ENCODE measurements at regions of chr14 and their contacts with region 1.

Region 1: DNA sequence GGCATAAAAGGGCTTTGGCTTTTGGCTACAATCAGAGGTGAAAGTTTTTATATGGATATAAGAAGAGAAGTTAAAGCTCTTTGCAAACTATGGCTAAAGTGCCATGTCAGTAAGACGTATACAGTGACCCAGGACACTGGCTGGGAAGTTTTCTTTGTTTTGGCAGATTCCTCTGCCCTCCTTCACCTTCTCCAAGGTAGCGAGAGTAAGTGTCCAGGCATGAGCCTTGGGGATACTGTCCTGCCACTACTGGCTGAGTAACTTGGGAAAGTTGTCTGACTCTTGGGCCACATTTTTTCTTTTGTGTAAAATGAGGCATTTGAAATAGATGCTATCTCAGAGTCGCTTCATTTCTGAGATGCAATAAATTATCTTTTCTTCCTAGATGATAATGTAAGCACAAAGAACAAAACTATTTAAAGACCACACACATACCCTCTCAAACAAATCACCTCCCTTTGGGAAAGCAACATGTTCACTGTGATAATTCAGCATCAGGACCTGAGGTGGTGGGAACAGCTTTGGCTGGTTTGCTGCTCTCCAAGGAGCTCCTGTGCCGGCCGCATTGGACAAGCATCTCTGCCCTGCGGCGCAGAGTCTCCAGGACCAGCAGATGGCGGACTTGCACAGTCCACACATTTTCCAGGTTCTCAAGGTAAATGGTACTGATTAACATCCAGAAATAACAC is 106.3 kb downstream of the PTCSC3 start:
- DNase-seq: peak; percentile 82
- ATAC-seq: peak; percentile 74
- H3K4me3 ChIP-seq: no peak overlapping the region
- H3K27ac ChIP-seq: no peak overlapping the region
- H3K4me1 ChIP-seq: peaks cover 25% of the 10 kb centered on the region
- H3K27me3 ChIP-seq: peaks cover 31% of the 10 kb centered on the region
- CTCF ChIP-seq: peak; percentile 93

Region 2: DNA sequence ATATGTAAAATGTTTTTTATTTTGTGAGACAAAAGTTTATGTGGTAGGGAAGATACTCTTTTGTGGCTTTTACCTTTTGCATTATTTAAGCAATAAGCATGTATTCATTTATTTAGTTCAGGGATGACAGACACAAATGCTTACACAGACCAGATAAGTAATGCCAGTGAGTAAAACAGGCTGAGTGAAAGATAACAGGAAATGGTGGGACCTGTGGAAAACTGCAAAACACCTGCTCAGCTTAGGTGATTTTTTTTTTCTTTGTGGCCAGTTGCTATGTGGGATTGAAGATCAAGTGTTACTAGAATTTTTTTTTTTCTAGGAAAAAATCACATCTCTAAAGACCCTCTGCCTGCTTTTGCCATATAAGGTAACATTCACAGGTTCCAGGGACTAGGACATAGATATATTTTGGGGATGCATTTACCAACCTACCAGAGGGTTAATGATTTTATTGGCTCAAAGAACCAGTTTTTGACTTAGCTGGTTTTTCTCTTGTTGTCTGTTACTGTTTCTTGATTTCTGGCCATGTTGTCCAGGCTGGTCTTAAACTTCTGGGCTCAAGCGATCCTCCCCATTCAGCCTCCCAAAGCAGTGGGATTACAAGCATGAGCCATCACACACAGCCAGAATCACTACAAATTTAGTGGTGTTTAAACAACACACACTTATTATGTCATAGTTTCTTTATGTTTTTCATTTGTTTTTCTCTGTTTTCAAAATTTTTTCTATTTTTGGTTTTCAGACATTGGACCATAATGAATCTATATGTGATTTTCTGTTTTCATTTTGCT is 768.2 kb before region 1 on chr14:
- CTCF ChIA-PET with region 1: no interaction called
- POLR2A ChIA-PET with region 1: no interaction called
- intact Hi-C with region 1: no loop called
- DNase-seq: no peak
- ATAC-seq: no peak
- H3K4me3 ChIP-seq: no peak overlapping the region
- H3K27ac ChIP-seq: no peak overlapping the region
- H3K4me1 ChIP-seq: no peaks in the 10 kb centered on the region
- H3K27me3 ChIP-seq: no peaks in the 10 kb centered on the region
- CTCF ChIP-seq: no peak

Region 3: DNA sequence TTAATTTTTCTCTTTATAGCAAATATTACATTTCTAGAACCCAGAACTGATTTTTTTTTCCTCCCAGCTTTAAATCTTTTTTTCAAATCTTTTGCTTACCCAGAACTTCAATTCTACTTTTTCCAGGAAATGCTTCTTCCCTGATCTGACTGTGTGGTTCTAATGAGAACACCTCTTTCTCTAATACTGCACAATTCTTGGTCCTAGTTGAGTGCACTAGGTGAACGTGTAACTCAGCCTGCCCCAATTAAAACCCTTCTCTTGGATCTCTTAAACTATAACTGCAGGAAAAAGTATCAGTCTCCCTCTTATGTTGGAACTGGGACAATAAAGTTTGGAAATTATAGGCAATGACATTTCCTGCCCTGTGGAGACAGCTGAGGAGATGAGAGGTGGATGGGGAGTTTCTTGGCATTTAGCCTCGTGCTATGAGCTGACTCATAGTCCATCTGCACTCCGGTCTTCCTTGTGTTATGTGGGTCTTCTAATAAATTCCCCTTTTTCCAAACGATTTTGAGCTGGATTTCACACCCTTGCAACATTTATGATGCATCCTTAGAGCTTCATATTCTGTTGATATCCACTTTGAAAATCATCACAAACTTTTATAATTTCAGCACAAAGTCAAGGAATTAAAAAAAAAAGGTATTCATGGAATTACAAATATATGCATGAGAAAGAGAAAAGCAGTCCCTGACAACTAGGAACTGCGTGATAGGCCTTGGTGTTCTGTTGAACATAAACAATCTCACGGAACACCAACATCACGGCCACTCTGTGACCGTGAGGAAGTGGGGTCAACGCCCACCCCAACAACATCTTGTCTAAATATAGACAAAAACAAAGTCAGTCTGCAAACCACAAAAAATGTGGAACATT is 191.7 kb before region 1 on chr14:
- CTCF ChIA-PET with region 1: interaction called, 6 read pairs
- POLR2A ChIA-PET with region 1: no interaction called
- intact Hi-C with region 1: loop called (anchors 1 kb)
- DNase-seq: peak; percentile 94
- ATAC-seq: peak; percentile 74
- H3K4me3 ChIP-seq: peak overlapping the region; percentile 23; the same call in 1 of the 2 replicates
- H3K27ac ChIP-seq: peak overlapping the region; percentile 50
- H3K4me1 ChIP-seq: peaks cover 32% of the 10 kb centered on the region
- H3K27me3 ChIP-seq: no peaks in the 10 kb centered on the region
- CTCF ChIP-seq: no peak

Region 4: GRCh38 chr14:35959835-35960234 is 110.3 kb before region 1 on chr14:
- CTCF ChIA-PET with region 1: interaction called, 11 read pairs
- POLR2A ChIA-PET with region 1: no interaction called
- intact Hi-C with region 1: loop called (anchors 5 kb)
- DNase-seq: peak; percentile 22
- ATAC-seq: no peak; the same call in 1 of the 2 replicates
- H3K4me3 ChIP-seq: no peak overlapping the region
- H3K27ac ChIP-seq: no peak overlapping the region
- H3K4me1 ChIP-seq: no peaks in the 10 kb centered on the region
- H3K27me3 ChIP-seq: peaks cover 38% of the 10 kb centered on the region
- CTCF ChIP-seq: peak; percentile 42; the same call in 1 of the 2 replicates

Region 5: GRCh38 chr14:36281309-36281708 is 211.1 kb after region 1 on chr14:
- CTCF ChIA-PET with region 1: no interaction called
- POLR2A ChIA-PET with region 1: no interaction called
- intact Hi-C with region 1: loop called (anchors 10 kb)
- DNase-seq: no peak
- ATAC-seq: no peak
- H3K4me3 ChIP-seq: no peak overlapping the region
- H3K27ac ChIP-seq: no peak overlapping the region
- H3K4me1 ChIP-seq: no peaks in the 10 kb centered on the region
- H3K27me3 ChIP-seq: peaks cover 74% of the 10 kb centered on the region
- CTCF ChIP-seq: no peak

Region 6: DNA sequence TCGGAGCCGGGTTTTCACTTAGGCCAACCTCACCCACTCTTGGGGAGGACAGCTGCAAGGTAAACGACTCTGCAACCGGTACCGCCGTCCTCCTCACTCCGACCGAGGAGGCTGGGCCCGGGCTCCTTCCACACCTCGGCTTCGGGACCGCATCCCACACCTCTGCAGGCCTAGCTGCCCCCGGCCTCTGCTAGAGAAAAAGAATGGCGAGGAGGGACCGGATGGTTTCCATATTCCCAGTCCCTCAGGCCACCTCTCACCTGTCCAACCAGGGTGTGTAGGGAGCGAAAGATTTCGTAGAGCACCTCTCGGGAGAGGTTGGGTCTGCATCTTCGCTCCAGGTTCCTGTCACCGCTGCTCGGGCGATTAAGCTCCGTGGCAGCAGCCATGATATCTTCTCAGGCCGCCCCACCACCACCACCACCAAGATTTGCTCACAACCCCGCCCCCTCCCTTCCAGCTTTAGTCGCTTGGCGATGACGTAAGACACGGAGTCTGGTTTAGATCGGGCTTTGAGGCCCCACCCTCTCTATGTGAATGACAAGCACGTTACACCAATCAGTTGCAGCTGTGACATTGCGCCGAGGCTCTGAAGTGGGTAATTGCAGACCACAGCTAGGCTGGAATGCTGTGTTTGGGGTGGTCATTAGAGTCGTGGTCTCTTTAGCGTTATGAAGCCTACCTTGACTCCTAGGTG is 250.2 kb after region 1 on chr14 and contains the start of gene MBIP:
- CTCF ChIA-PET with region 1: interaction called, 3 read pairs
- POLR2A ChIA-PET with region 1: no interaction called
- intact Hi-C with region 1: loop called (anchors 5 kb)
- DNase-seq: peak; percentile 97
- ATAC-seq: peak; percentile 88
- H3K4me3 ChIP-seq: peak within 1 kb of the TSS; percentile 95
- H3K27ac ChIP-seq: peak within 1 kb of the TSS; percentile 39
- H3K4me1 ChIP-seq: peaks cover 31% of the 10 kb centered on the region
- H3K27me3 ChIP-seq: peaks cover 37% of the 10 kb centered on the region; the same call in 1 of the 2 replicates
- CTCF ChIP-seq: no peak
- total RNA-seq, gene MBIP: 7.8 and 8.5 TPM in 2 replicates

Region 7: DNA sequence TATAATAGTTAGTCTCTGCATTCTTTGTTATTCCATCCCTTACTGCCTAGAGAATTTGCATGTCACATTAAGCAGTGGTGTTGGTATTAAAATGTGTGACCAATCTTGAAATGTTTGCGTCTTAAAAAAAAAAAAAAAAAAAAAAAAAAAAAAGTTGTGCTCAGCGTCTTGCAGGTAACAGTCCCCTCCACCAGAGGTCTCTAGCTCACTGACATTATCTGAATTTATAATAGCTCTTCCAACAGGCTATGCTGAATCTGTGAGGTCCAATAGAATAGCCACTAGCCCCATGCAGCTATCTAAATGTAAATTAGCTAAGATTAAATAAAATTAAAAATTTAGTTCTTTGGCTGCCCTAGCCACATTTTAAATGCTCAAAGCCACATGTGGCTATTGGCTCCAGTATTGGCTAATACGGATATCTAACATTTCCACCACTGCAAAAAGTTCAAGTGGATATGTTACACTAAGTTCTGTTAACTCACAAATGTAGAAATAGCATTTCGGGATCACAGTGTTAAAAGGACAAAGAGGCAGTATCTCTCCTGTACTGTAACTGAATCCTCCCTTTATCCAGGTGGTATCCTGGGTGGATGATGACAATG is 483.6 kb after region 1 on chr14:
- CTCF ChIA-PET with region 1: interaction called, 7 read pairs
- POLR2A ChIA-PET with region 1: no interaction called
- intact Hi-C with region 1: loop called (anchors 1 kb)
- DNase-seq: peak; percentile 72
- ATAC-seq: peak; percentile 75
- H3K4me3 ChIP-seq: no peak overlapping the region
- H3K27ac ChIP-seq: no peak overlapping the region
- H3K4me1 ChIP-seq: no peaks in the 10 kb centered on the region
- H3K27me3 ChIP-seq: peaks cover 13% of the 10 kb centered on the region
- CTCF ChIP-seq: peak; percentile 79

Region 8: DNA sequence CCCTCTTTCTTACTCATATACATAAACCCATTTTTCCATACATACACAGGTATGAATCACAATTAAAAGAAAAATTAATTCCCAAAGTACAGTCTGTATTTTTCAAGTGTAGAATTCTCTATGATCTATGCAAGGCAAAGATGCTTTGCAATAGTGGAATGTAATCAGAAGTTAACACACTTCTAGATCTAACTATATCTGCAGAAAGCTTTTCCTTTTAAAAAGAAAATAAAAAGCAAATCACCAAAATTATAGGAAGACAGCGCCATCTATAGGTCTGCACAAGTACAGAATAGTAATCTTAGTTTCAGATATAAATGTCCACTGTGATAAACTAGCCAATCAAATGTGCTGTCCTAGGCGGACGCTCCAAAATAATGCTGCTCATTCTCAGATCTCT is 1080.2 kb after region 1 on chr14:
- CTCF ChIA-PET with region 1: no interaction called
- POLR2A ChIA-PET with region 1: no interaction called
- intact Hi-C with region 1: loop called (anchors 10 kb)
- DNase-seq: peak; percentile 76
- ATAC-seq: peak; percentile 82
- H3K4me3 ChIP-seq: no peak overlapping the region
- H3K27ac ChIP-seq: no peak overlapping the region
- H3K4me1 ChIP-seq: peaks cover 5% of the 10 kb centered on the region
- H3K27me3 ChIP-seq: no peaks in the 10 kb centered on the region
- CTCF ChIP-seq: peak; percentile 90

Measured in PC-3 (cell line).